PC-9 (cell line): ENCODE measurements at regions of chr12 and their contacts with region 1.

Region 1: DNA sequence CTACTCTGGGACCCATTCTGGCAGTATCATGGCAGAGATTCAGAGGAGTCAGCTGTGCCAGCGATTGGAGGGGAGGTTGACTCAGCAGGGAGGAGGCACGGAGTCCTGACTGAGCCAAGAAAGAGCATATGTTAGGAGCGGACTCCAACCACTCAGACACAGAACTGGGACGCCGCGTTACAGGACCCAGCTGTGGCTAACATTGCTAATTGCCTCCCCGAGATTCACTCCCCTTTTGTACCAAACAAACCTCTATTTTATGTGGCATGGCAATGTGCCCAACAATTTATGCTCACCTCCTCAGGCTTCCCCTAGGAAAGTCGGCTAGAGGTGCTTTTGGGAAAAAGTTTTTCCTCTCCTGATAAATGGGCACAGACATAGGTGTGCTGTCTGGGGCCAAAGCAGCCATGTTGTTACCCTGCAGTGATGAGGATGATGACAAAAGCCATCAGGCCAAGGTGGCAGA is 15.2 kb upstream of the CLIP1 start:
- DNase-seq: no peak
- H3K4me3 ChIP-seq: no peak overlapping the region
- H3K27ac ChIP-seq: no peak overlapping the region
- H3K4me1 ChIP-seq: 0 out of 2 replicates have a peak, but pooled peaks cover 4% of the 10 kb centered on the region
- H3K27me3 ChIP-seq: no peaks in the 10 kb centered on the region
- CTCF ChIP-seq: no peak

Region 2: DNA sequence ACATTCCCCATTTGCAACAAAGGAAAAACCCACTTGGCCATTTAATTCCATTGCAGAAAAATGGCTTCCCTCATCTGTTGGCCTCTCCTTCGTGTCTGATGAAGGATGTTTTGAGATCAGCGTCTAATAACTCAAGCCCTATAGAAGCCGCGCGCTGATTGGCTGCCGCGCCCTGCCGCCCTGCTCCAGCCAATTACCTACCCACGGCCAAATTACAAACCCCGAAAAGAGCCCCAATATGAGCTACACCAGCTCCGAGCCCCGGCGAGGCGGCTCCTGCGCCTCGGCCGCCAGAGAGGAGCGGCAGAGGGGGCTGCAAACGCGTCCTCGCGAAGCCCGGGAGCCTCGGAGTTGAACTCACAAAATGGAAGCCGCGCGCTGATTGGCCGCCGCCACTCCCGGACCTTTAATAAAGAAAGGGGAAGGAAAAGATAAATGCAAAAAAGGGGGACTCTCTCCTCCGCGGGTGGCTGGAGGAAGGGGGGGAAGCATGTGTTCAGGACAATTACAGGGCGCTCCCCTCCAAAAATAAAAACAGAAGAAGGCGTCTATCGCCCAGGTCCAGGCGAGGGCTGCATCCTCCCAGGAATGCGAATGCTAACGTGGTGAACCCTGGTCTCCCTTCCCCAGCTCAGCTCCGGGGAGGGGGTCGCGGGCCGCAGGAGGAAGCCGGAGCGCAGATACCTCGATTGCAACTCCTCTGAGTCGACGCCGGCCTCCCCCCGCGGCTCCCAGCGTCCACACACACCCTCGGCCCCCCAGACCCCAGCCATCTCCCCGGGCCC is 634.7 kb before region 1 on chr12:
- CTCF ChIA-PET with region 1: no interaction called
- POLR2A ChIA-PET with region 1: interaction called, 12 read pairs
- intact Hi-C with region 1: no loop called
- DNase-seq: peak; percentile 88 to 92
- H3K4me3 ChIP-seq: peak overlapping the region; percentile 83
- H3K27ac ChIP-seq: peak overlapping the region; percentile 100
- H3K4me1 ChIP-seq: peaks cover 31% of the 10 kb centered on the region
- H3K27me3 ChIP-seq: no peaks in the 10 kb centered on the region
- CTCF ChIP-seq: no peak

Region 3: GRCh38 chr12:121888478-121889266 is 549.0 kb before region 1 on chr12 and contains the start of gene PSMD9:
- CTCF ChIA-PET with region 1: no interaction called
- POLR2A ChIA-PET with region 1: no interaction called
- intact Hi-C with region 1: no loop called
- DNase-seq: peak; percentile 89 to 98
- H3K4me3 ChIP-seq: peak within 1 kb of the TSS; percentile 73
- H3K27ac ChIP-seq: peak within 1 kb of the TSS; percentile 72
- H3K4me1 ChIP-seq: peaks cover 26% of the 10 kb centered on the region
- H3K27me3 ChIP-seq: no peaks in the 10 kb centered on the region
- CTCF ChIP-seq: peak; percentile 63
- total RNA-seq, gene PSMD9: 64.8 and 76.6 TPM in 2 replicates

Region 4: DNA sequence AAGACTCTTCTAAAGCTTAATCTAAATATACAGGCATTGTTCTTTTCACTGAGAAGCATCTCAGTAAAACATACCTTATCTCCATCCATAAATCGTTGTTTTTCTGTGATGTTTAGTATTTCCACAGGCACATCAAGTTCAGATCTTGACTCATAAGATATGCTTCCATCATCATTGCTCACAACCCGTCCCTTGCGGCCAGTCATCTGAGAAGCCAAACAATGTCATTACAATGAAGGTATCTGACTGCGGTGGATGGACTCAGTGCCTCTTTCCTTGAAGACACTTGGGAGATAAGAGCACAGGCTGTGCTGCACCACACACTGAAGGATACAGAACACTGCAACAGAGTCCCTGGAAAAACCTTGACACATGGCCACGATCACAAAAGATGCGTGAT is 882.1 kb after region 1 on chr12:
- CTCF ChIA-PET with region 1: no interaction called
- POLR2A ChIA-PET with region 1: no interaction called
- intact Hi-C with region 1: no loop called
- DNase-seq: no peak
- H3K4me3 ChIP-seq: no peak overlapping the region
- H3K27ac ChIP-seq: no peak overlapping the region
- H3K4me1 ChIP-seq: no peaks in the 10 kb centered on the region
- H3K27me3 ChIP-seq: no peaks in the 10 kb centered on the region
- CTCF ChIP-seq: no peak